ENCODE measurements at regions of chr7 and their contacts with region 1.

Region 1: GRCh38 chr7:155598810-155599210 is 45.7 kb upstream of the RBM33 start:
- DNase-seq: peak; percentile 90
- H3K4me3 Mint-ChIP-seq: no peak overlapping the region
- H3K27ac Mint-ChIP-seq: peak overlapping the region; percentile 14
- H3K4me1 Mint-ChIP-seq: peaks cover 15% of the 10 kb centered on the region
- H3K27me3 Mint-ChIP-seq: peaks cover 32% of the 10 kb centered on the region

Region 2: DNA sequence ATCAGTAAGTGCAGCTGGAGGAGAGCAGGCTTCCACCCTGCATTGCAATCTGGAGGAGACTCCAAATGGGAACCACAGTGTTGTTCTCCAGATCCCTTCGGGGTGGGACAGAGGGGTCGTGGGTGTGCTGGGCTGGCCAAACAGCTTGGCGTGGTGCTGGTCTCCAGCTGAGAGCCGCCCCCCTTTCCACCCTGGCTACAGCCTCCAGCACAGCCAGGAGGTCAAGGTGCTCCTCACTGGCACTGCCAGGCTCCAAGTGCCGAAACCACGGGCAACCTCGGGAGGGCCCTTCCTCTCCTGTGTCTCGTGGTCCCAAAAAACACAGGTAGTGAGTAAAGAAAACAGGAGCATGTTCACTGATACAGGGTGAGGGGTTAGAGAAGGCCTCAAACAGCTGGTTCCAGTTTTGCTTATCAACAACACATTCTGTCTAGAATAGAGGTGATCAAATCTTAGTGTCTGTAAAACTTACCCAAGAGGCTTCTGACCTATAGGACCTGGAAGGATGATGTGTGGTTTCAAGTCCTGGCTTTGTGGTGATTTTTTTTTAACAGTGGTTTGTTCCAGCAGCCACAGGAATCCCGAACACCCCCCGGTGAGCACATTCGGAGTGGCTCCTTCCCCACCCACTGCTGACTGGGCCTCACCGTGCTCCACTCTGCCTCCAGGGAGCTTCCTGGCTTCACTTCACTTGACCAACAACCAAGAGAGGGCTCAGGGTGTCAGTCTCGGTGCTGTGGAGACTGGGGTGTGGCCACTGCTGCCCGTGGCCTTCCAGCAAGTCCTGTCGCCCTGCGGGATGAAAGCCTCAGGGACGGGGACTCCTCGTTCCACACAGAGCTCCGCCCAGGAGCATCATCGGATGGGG is 172.0 kb before region 1 on chr7:
- CTCF ChIA-PET with region 1: no interaction called
- intact Hi-C with region 1: no loop called
- DNase-seq: no peak
- H3K4me3 Mint-ChIP-seq: no peak overlapping the region
- H3K27ac Mint-ChIP-seq: no peak overlapping the region
- H3K4me1 Mint-ChIP-seq: no peaks in the 10 kb centered on the region
- H3K27me3 Mint-ChIP-seq: peaks cover 14% of the 10 kb centered on the region

Region 3: GRCh38 chr7:155610633-155611193 is 11.9 kb after region 1 on chr7:
- CTCF ChIA-PET with region 1: interaction called, 14 read pairs
- intact Hi-C with region 1: no loop called
- DNase-seq: no peak
- H3K4me3 Mint-ChIP-seq: no peak overlapping the region
- H3K27ac Mint-ChIP-seq: no peak overlapping the region
- H3K4me1 Mint-ChIP-seq: no peaks in the 10 kb centered on the region
- H3K27me3 Mint-ChIP-seq: peaks cover 5% of the 10 kb centered on the region

Region 4: GRCh38 chr7:155729834-155730233 is 131.0 kb after region 1 on chr7:
- CTCF ChIA-PET with region 1: interaction called, 11 read pairs
- intact Hi-C with region 1: no loop called
- DNase-seq: no peak
- H3K4me3 Mint-ChIP-seq: no peak overlapping the region
- H3K27ac Mint-ChIP-seq: no peak overlapping the region
- H3K4me1 Mint-ChIP-seq: peaks cover 52% of the 10 kb centered on the region
- H3K27me3 Mint-ChIP-seq: no peaks in the 10 kb centered on the region

Region 5: GRCh38 chr7:155738652-155739537 is 140.1 kb after region 1 on chr7:
- CTCF ChIA-PET with region 1: interaction called, 25 read pairs
- intact Hi-C with region 1: loop called (anchors 1 kb)
- DNase-seq: peak; percentile 87
- H3K4me3 Mint-ChIP-seq: no peak overlapping the region
- H3K27ac Mint-ChIP-seq: no peak overlapping the region
- H3K4me1 Mint-ChIP-seq: peaks cover 47% of the 10 kb centered on the region
- H3K27me3 Mint-ChIP-seq: no peaks in the 10 kb centered on the region

Region 6: DNA sequence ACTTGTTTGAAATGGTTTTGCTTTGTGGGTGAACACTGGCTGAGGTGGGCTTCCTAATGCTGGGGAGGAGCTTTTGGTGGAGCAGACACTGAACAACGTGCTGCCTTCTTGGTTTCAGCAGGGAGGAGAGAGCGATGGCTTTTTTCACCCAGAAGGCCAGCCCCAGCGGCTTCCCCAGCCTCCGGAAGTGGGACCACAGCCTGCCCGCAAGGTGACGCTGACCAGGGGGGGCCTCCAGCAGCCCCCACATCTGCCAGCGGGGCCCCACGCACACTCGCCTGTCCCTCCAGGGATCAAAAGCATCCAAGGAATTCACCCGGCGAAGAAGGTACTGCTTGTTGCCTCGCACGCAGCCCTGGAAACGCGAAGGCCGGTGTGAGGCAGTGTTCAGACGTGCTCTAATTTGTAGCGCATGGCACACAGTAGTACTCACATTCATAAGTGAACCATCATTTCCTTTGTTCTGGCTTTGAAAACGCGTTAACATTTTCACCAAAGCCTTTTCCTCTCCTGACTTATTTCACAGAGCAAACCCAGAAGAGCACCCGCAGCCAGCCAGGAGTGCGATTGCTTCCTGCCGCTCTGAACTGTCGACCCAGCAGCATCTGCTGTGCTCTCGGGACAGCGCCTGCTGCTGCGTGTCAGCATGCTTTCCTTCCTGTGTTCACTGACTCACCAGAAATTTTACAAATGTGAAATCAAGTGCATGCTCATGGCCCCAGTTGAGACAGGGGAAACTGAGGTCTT is 165.1 kb after region 1 on chr7:
- CTCF ChIA-PET with region 1: interaction called, 87 read pairs
- intact Hi-C with region 1: loop called (anchors 1 kb)
- DNase-seq: peak; percentile 82
- H3K4me3 Mint-ChIP-seq: peak overlapping the region; percentile 70
- H3K27ac Mint-ChIP-seq: peak overlapping the region; percentile 95
- H3K4me1 Mint-ChIP-seq: peaks cover 42% of the 10 kb centered on the region
- H3K27me3 Mint-ChIP-seq: no peaks in the 10 kb centered on the region

Region 7: DNA sequence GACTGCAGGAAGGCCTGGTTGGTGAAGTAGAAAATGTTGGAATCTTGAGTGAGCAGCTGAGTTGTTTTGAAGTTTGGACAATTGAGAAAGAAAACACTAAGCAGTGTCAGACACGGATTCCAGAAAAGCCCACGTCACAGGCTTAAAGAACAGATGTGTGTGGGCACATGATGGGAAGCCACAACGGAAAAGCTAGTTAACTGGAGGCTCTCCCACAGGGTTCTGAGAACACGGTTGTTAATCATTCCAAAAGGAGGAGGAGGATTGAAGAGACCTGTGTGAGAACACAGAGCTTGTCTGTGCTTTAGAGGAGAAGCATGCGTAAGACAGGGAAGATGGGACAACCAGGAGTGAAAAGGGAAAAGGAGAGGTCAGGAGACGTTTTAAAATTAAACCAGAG is 170.9 kb after region 1 on chr7:
- CTCF ChIA-PET with region 1: interaction called, 87 read pairs
- intact Hi-C with region 1: loop called (anchors 1 kb)
- DNase-seq: no peak
- H3K4me3 Mint-ChIP-seq: no peak overlapping the region
- H3K27ac Mint-ChIP-seq: no peak overlapping the region
- H3K4me1 Mint-ChIP-seq: peaks cover 3% of the 10 kb centered on the region
- H3K27me3 Mint-ChIP-seq: no peaks in the 10 kb centered on the region